Activated B cell treated with CpG ODN at 0.5 μM for 24 hours (primary cell): ENCODE measurements at regions of chr11 and their contacts with region 1.

Region 1: DNA sequence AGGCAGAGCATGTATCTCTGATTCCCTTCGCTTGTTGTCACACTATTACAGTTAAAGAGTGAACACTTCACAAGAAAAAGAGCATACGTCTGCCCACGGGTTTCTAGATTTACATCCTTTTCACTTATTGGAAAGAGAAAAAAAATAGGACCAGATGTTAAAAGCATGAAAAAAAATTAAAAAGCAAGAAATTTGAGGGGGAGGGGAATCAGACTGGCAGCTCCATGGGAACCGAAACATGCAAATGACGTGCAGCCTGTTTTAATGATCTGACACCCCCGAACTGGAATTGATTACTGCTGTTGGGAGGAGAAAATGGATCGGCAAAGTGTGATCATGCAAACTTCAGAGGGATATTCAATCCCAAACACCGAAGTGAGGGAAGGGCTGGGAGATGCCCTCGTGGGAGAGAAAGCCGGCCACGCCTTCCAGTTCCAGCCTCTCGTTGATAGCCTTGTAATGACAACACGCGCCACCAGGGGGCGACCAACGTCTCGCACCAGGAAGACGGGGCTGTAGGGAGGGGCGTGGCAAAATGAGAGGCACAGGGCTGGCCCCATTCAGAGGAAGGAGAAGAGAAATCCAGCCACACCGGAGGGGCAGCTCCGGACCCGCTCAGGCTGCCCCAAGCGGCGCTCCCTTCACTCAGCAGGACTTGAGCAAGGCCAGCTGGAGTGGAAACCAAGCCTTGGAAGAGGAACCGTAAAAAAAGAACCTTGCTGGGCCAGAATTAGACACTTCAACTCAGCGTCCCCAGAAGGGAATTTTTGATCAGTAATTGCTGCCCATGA is 53.8 kb upstream of the SYT13 start:
- DNase-seq: peak; percentile 90
- ATAC-seq: peak; percentile 100
- H3K4me3 Mint-ChIP-seq: peak overlapping the region; percentile 93
- H3K27ac Mint-ChIP-seq: peak overlapping the region; percentile 81
- H3K4me1 Mint-ChIP-seq: peaks cover 20% of the 10 kb centered on the region
- H3K27me3 Mint-ChIP-seq: peaks cover 11% of the 10 kb centered on the region
- CTCF ChIP-seq: peak; percentile 73

Region 2: GRCh38 chr11:44727373-44728287 is 612.3 kb before region 1 on chr11:
- CTCF ChIA-PET with region 1: no interaction called
- POLR2A ChIA-PET with region 1: no interaction called
- intact Hi-C with region 1: loop called (anchors 5 kb)
- DNase-seq: peak; percentile 72
- ATAC-seq: peak; percentile 71
- H3K4me3 Mint-ChIP-seq: peak overlapping the region; percentile 86
- H3K27ac Mint-ChIP-seq: no peak overlapping the region
- H3K4me1 Mint-ChIP-seq: peaks cover 22% of the 10 kb centered on the region
- H3K27me3 Mint-ChIP-seq: peaks cover 15% of the 10 kb centered on the region
- CTCF ChIP-seq: no peak

Region 3: GRCh38 chr11:44936525-44936924 is 403.4 kb before region 1 on chr11:
- CTCF ChIA-PET with region 1: interaction called, 11 read pairs
- POLR2A ChIA-PET with region 1: no interaction called
- intact Hi-C with region 1: no loop called
- DNase-seq: peak; percentile 84
- ATAC-seq: peak; percentile 95
- H3K4me3 Mint-ChIP-seq: no peak overlapping the region
- H3K27ac Mint-ChIP-seq: no peak overlapping the region
- H3K4me1 Mint-ChIP-seq: peaks cover 27% of the 10 kb centered on the region
- H3K27me3 Mint-ChIP-seq: no peaks in the 10 kb centered on the region
- CTCF ChIP-seq: peak; percentile 71

Region 4: DNA sequence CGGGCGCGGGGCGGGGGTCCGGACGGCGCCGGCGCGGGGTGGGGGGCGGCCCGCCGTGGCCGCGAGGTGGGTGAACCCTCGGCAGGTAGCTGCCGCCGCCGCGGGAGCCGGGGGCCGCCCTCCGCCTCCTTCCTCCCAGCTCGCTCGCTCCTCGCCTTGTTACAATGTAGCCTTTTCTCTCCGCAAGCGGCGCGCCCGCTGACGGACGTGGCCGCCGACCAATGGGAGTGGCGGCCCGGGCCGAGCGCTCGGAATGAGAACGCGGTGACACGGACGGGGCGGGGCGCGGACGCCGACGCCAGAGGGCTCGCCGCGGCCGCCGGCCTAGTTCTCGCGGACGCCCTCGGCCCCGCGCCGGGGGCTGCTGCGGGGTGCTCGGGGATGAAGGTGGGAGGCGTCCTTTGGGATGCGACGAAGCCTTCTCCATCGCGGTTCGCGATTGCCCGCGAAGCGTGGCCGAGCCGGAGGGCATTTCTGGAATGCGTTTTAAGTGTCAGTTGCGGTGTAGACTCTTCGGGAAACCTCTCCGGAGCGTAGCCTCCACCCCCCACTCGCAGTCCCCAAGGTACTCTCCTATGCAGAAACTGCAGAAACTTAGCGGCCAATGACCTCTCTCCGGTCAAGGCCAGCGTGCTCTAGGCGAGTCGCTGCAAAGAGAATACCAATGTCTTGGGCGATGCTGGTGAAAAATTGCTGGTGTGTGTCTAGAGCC is 192.8 kb before region 1 on chr11:
- CTCF ChIA-PET with region 1: no interaction called
- POLR2A ChIA-PET with region 1: no interaction called
- intact Hi-C with region 1: loop called (anchors 1 kb)
- DNase-seq: peak; percentile 92
- ATAC-seq: peak; percentile 98
- H3K4me3 Mint-ChIP-seq: peak overlapping the region; percentile 87
- H3K27ac Mint-ChIP-seq: peak overlapping the region; percentile 77
- H3K4me1 Mint-ChIP-seq: peaks cover 33% of the 10 kb centered on the region
- H3K27me3 Mint-ChIP-seq: peaks cover 7% of the 10 kb centered on the region
- CTCF ChIP-seq: no peak

Region 5: DNA sequence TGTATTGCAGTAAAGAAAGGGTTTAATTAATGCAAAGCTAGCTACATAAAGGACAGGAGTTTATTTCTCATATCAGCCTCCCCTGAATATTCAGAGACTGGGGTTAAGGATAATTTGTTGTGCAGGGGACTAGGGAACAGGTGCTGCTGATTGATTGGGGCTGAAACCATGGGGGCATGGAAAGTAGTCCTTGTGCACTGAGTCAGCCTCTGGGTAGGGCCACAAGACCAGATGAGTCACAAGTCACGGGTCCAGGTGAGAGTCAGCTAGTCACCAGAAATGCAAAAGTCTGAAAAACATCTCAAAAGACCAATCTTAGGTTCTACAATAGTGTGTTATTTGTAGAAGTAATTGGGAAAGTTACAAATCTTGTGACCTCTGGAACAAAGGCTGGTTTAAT is 20.8 kb before region 1 on chr11:
- CTCF ChIA-PET with region 1: no interaction called
- POLR2A ChIA-PET with region 1: no interaction called
- intact Hi-C with region 1: no loop called
- DNase-seq: no peak
- ATAC-seq: no peak
- H3K4me3 Mint-ChIP-seq: no peak overlapping the region
- H3K27ac Mint-ChIP-seq: no peak overlapping the region
- H3K4me1 Mint-ChIP-seq: no peaks in the 10 kb centered on the region
- H3K27me3 Mint-ChIP-seq: peaks cover 35% of the 10 kb centered on the region
- CTCF ChIP-seq: no peak

Region 6: GRCh38 chr11:45354976-45355705 is 15.2 kb after region 1 on chr11:
- CTCF ChIA-PET with region 1: interaction called, 5 read pairs
- POLR2A ChIA-PET with region 1: interaction called, 5 read pairs
- intact Hi-C with region 1: loop called (anchors 1 kb)
- DNase-seq: peak; percentile 77
- ATAC-seq: peak; percentile 95
- H3K4me3 Mint-ChIP-seq: peak overlapping the region; percentile 83
- H3K27ac Mint-ChIP-seq: peak overlapping the region; percentile 73
- H3K4me1 Mint-ChIP-seq: peaks cover 15% of the 10 kb centered on the region
- H3K27me3 Mint-ChIP-seq: peaks cover 5% of the 10 kb centered on the region
- CTCF ChIP-seq: no peak

Region 7: DNA sequence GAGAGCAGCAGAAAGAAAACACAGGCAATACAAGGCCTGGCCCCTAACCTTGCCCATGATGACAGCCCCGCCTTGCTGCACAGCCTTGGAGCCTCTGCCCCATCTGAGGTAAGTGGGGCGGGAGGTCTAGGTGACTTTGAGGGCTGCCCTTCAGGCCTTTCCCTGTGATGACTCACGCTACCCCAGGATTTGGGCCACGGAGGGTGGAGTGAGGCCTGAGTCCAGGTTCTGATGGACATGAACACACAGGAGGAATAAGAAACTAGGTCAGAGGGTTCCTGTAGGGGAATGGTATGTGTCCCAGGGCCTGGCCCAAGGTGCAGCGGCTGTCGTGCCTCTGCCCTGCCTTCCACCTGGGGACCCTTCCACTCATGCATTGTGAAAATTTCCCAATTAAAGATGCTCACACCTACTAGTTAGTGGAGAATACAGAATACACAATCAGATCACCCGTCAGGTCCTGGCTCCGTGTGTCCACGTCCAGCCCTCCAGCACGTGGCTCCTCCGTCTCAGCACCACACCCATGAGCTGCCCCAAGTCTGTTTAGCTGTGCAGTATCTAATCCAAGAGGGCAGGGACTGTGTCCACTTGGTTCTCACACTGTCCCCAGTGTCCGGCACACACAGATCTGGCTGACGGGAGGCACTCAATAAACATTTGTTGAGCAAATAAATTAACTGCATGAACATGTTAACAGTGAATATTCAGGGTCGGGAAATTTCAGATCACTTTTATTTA is 214.5 kb after region 1 on chr11:
- CTCF ChIA-PET with region 1: no interaction called
- POLR2A ChIA-PET with region 1: no interaction called
- intact Hi-C with region 1: no loop called
- DNase-seq: no peak
- ATAC-seq: no peak
- H3K4me3 Mint-ChIP-seq: no peak overlapping the region
- H3K27ac Mint-ChIP-seq: no peak overlapping the region
- H3K4me1 Mint-ChIP-seq: no peaks in the 10 kb centered on the region
- H3K27me3 Mint-ChIP-seq: peaks cover 3% of the 10 kb centered on the region
- CTCF ChIP-seq: no peak

Region 8: GRCh38 chr11:45655347-45655756 is 315.4 kb after region 1 on chr11:
- CTCF ChIA-PET with region 1: interaction called, 6 read pairs
- POLR2A ChIA-PET with region 1: no interaction called
- intact Hi-C with region 1: loop called (anchors 1 kb)
- DNase-seq: peak; percentile 44
- ATAC-seq: peak; percentile 56
- H3K4me3 Mint-ChIP-seq: no peak overlapping the region
- H3K27ac Mint-ChIP-seq: no peak overlapping the region
- H3K4me1 Mint-ChIP-seq: peaks cover 3% of the 10 kb centered on the region
- H3K27me3 Mint-ChIP-seq: peaks cover 32% of the 10 kb centered on the region
- CTCF ChIP-seq: no peak

Region 9: DNA sequence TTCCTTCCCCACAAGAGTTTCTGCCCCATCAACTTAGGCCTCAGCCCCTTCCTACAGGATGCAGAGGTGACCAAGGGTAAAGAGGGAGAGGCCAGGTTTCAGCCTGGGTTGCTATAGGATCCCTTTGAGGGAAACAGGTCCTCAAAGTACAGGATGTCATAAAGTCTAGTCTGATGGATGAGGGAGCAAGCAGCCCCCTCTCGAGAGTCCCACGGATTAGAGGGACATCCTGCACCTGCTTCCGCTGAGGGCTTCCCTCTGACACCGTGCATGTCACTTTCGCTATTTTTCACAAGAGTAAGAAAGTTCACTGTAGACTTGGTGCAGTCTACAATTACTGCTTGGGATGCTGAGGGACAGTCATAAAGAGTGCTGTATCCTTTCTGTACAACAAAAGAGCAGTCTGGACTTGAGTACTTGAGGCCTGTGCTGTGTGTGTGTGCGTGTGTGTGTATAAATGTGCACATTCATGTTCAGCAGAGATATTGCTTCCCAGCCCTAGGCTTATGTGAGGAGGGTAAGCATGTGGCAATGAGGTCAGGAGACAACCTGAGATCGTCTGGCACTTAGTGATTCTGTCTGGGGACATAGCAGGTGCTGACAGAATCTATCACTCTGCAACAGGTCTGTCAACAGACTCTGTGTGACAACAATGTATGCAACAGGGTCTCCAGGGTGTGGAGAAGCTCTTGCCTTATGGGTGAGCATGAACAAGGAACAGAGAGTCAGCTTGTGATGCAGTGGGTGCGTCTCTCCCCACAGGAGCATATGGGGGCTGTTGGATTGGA is 343.5 kb after region 1 on chr11:
- CTCF ChIA-PET with region 1: no interaction called
- POLR2A ChIA-PET with region 1: no interaction called
- intact Hi-C with region 1: no loop called
- DNase-seq: no peak
- ATAC-seq: no peak
- H3K4me3 Mint-ChIP-seq: no peak overlapping the region
- H3K27ac Mint-ChIP-seq: no peak overlapping the region
- H3K4me1 Mint-ChIP-seq: no peaks in the 10 kb centered on the region
- H3K27me3 Mint-ChIP-seq: peaks cover 19% of the 10 kb centered on the region
- CTCF ChIP-seq: no peak

Region 10: GRCh38 chr11:45771566-45772448 is 431.9 kb after region 1 on chr11:
- CTCF ChIA-PET with region 1: interaction called, 5 read pairs
- POLR2A ChIA-PET with region 1: no interaction called
- intact Hi-C with region 1: loop called (anchors 1 kb)
- DNase-seq: peak; percentile 71
- ATAC-seq: peak; percentile 88
- H3K4me3 Mint-ChIP-seq: peak overlapping the region; percentile 89
- H3K27ac Mint-ChIP-seq: peak overlapping the region; percentile 64
- H3K4me1 Mint-ChIP-seq: peaks cover 9% of the 10 kb centered on the region
- H3K27me3 Mint-ChIP-seq: peaks cover 3% of the 10 kb centered on the region
- CTCF ChIP-seq: no peak